ENCODE measurements at regions of chr10 and their contacts with region 1.

Region 1: DNA sequence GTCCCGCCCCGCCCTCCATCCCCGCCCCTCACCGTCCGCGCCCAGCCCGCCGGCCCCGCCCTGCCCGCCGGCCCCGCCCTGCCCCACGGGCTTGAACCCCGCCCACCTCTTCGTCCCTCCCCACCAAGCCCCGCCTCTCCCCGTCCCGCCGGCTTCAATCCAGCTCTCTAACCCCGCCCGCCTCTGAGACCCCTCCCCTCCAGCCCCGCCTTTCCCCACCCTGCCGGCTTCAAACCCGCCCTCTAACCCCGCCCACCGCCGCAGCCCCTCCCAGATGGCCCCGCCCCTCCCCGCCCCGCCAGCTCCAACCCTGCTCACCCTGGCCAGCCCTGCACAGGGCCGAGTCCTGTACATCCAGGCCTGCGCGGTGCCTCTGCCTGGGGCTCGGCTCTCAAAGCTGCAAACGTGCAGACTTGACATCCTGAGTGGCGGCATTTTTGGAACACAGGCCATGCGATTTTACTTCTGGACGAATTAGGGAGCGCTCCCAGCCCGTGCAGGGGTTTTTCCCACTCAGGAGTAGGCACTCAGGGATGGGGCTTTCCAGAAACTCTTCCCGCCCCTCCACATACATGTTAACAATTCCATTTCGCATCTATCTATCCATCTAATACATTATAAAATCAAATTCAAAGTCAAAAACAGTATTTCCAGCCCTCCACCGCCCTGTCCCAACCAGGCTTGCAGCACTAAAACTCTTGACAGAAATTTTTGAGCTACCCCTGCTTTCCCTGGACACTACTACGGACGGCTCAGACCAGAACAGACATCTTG is 475 bp upstream of the NMT2 start:
- DNase-seq: peak; percentile 94
- ATAC-seq: peak; percentile 87
- H3K4me3 ChIP-seq: peak overlapping the region in 4 of 5 experiments; percentile 19 to 52 (median 32)
- H3K4me3 Mint-ChIP-seq: peak overlapping the region; percentile 59
- H3K27ac ChIP-seq: no peak overlapping the region
- H3K27ac Mint-ChIP-seq: no peak overlapping the region
- H3K4me1 ChIP-seq: peaks cover 21 to 24% of the 10 kb centered on the region in 2 donors
- H3K4me1 Mint-ChIP-seq: peaks cover 29% of the 10 kb centered on the region
- H3K27me3 ChIP-seq: no peaks in the 10 kb centered on the region
- H3K27me3 Mint-ChIP-seq: peaks cover 7% of the 10 kb centered on the region
- CTCF ChIP-seq: no peak

Region 2: DNA sequence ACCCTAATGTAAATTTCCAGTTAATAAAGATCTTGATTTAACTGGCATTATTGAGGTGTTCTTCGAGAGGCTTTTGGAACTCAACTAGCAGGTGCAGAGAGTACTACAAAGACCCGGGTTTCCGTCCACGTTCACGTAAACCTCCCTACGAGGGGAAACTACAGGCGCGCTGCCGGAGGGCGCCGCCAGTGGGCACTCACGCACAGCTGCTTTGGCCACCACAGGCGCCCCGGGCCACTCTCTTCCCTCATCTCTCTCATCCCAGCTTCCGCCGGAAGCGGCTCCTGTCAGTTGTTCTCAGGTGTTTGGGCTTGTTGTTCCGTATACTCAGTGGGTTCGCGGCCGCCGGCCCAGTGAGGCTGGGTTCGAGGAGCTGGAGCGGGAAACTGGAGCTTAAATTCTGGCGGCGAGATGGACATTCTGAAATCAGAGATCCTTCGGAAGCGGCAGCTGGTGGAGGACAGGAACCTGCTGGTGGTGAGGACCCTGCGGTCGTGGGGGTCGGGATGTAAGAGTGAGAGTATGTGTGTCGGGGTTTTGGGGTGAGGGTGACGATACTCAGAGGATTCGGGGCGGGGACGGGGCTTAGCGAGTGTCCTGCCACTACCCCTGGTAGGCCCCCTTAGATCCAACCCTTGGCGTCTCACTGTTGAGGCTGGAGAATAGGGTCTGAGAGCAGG is 1582.2 kb before region 1 on chr10 and contains the start of gene PRPF18:
- CTCF ChIA-PET with region 1: no interaction called
- POLR2A ChIA-PET with region 1: no interaction called
- intact Hi-C with region 1: loop called (anchors 2 kb)
- DNase-seq: peak; percentile 95
- ATAC-seq: peak; percentile 100
- H3K4me3 ChIP-seq: peak within 1 kb of the TSS; percentile 53 to 99 (median 84)
- H3K4me3 Mint-ChIP-seq: peak within 1 kb of the TSS; percentile 95
- H3K27ac ChIP-seq: peak within 1 kb of the TSS; percentile 0 to 85
- H3K27ac Mint-ChIP-seq: peak within 1 kb of the TSS; percentile 90
- H3K4me1 ChIP-seq: peaks cover 10 to 13% of the 10 kb centered on the region in 2 donors
- H3K4me1 Mint-ChIP-seq: peaks cover 31% of the 10 kb centered on the region
- H3K27me3 ChIP-seq: peaks cover 0 to 16% (median 2%) of the 10 kb centered on the region in 4 experiments
- H3K27me3 Mint-ChIP-seq: peaks cover 25% of the 10 kb centered on the region
- CTCF ChIP-seq: peak; percentile 99
- total RNA-seq, gene PRPF18: 28.9 and 31.8 TPM in 2 replicates

Region 3: GRCh38 chr10:14954001-14954770 is 214.8 kb before region 1 on chr10 and contains the start of gene DCLRE1C:
- CTCF ChIA-PET with region 1: no interaction called
- POLR2A ChIA-PET with region 1: no interaction called
- intact Hi-C with region 1: loop called (anchors 2 kb)
- DNase-seq: peak; percentile 91
- ATAC-seq: peak; percentile 77
- H3K4me3 ChIP-seq: peak within 1 kb of the TSS; percentile 74 to 89 (median 77)
- H3K4me3 Mint-ChIP-seq: peak within 1 kb of the TSS; percentile 96
- H3K27ac ChIP-seq: peak within 1 kb of the TSS; percentile 87 to 89
- H3K27ac Mint-ChIP-seq: peak within 1 kb of the TSS; percentile 97
- H3K4me1 ChIP-seq: peaks cover 42 to 62% of the 10 kb centered on the region in 2 donors
- H3K4me1 Mint-ChIP-seq: peaks cover 56% of the 10 kb centered on the region
- H3K27me3 ChIP-seq: no peaks in the 10 kb centered on the region
- H3K27me3 Mint-ChIP-seq: no peaks in the 10 kb centered on the region
- CTCF ChIP-seq: no peak
- total RNA-seq, gene DCLRE1C: 58.8 and 61.8 TPM in 2 replicates

Region 4: DNA sequence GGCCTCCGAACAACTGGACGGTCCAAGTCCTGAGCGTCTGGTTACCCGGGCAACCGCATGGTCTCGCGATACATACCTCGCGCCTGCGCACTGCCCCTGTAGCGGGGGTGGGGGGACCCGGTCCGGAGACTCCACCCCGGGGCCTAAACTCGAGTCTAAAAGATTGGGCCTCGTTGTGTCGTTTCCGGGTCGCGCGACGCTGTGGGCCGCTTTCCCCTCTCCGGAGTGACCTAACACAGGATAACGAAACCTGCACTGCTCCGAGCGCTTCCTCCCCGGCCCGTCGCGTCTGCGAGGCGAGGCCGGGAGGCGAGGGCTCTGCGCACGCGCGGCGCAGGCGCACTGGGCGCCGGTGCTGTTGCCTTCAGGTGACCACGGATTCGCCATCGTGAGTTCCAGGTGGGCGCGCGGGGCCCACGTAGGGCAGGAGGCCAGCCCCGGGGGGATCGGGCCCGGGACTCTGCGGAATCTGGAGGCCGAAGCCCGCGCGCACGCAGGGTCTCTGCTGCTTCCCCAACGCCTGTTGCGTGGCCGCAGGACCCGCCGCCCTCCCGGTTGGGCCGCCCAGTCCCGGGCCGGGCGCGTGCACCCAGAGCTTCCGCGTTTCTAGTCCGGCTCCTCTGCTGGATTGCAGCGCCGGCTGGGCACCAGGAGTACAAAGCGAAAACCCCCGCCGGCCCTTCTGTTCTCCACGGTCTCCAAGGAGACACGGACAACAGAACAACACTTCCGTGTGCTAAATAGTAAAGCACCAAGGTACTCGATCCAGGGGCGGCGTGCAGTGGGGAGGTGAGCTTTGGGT is 71.8 kb before region 1 on chr10 and contains the start of gene RPP38:
- CTCF ChIA-PET with region 1: interaction called, 5 read pairs
- POLR2A ChIA-PET with region 1: interaction called, 3 read pairs
- intact Hi-C with region 1: loop called (anchors 1 kb)
- DNase-seq: peak; percentile 98
- ATAC-seq: peak; percentile 75
- H3K4me3 ChIP-seq: peak within 1 kb of the TSS; percentile 80 to 91 (median 87)
- H3K4me3 Mint-ChIP-seq: peak within 1 kb of the TSS; percentile 93
- H3K27ac ChIP-seq: peak within 1 kb of the TSS; percentile 92 to 96
- H3K27ac Mint-ChIP-seq: peak within 1 kb of the TSS; percentile 94
- H3K4me1 ChIP-seq: peaks cover 23 to 27% of the 10 kb centered on the region in 2 donors
- H3K4me1 Mint-ChIP-seq: peaks cover 26% of the 10 kb centered on the region
- H3K27me3 ChIP-seq: no peaks in the 10 kb centered on the region
- H3K27me3 Mint-ChIP-seq: no peaks in the 10 kb centered on the region
- CTCF ChIP-seq: no peak
- total RNA-seq, gene RPP38: 24.5 and 24.8 TPM in 2 replicates

Region 5: DNA sequence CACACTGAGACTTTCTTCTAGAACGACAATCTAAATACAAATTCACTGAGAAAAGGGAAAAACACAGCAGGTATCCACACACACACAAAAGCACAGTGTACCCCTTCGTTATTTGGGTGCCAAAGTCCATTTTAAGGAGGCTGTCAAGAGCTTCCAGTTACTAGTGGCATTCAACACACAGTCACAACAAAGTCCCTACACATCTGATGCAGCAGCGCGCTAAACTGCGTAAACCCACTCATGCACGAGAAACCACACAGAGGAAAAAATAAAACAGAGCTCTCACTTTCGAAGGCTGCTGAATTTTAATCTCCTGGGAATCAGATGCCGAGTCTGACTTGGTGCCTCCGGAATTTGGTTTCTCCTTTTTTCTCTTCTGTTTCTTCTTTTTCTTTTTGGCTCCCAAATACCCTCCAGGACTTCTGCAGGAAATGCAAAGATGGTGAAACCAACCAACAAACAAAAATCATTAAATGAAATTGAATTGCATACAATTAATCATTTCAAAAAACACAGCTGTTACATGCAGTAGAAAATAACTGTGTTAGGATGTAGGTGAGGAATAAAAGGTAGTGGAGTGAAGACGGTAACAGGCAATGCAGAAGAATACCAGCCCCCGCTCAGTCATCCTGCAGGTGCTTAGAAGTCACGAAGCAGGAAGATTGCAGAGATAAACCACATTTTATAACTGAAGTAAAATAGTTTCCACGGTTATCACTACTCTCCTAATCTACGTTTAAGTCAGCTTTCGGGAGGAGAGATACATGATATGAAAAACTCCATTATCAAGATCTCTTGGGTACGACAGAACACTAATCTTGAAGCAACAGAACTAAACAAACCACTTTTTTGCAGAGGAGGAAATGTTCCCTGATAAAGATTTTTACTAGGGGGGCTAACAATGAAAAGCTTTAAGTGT is 27.6 kb before region 1 on chr10:
- CTCF ChIA-PET with region 1: interaction called, 16 read pairs
- POLR2A ChIA-PET with region 1: interaction called, 24 read pairs
- intact Hi-C with region 1: loop called (anchors 1 kb)
- DNase-seq: peak; percentile 90
- ATAC-seq: peak; percentile 91
- H3K4me3 ChIP-seq: peak overlapping the region in 3 of 5 experiments; percentile 13 to 39 (median 24)
- H3K4me3 Mint-ChIP-seq: peak overlapping the region; percentile 84
- H3K27ac ChIP-seq: peak overlapping the region; percentile 20 to 58
- H3K27ac Mint-ChIP-seq: peak overlapping the region; percentile 92
- H3K4me1 ChIP-seq: peaks cover 23 to 24% of the 10 kb centered on the region in 2 donors
- H3K4me1 Mint-ChIP-seq: peaks cover 42% of the 10 kb centered on the region
- H3K27me3 ChIP-seq: no peaks in the 10 kb centered on the region
- H3K27me3 Mint-ChIP-seq: no peaks in the 10 kb centered on the region
- CTCF ChIP-seq: no peak

Region 6: GRCh38 chr10:15209827-15210509 is 41.0 kb after region 1 on chr10:
- CTCF ChIA-PET with region 1: interaction called, 5 read pairs
- POLR2A ChIA-PET with region 1: no interaction called
- intact Hi-C with region 1: loop called (anchors 1 kb)
- DNase-seq: peak; percentile 79
- ATAC-seq: peak; percentile 66
- H3K4me3 ChIP-seq: peak overlapping the region in 1 of 5 experiments; percentile 27
- H3K4me3 Mint-ChIP-seq: no peak overlapping the region
- H3K27ac ChIP-seq: no peak overlapping the region
- H3K27ac Mint-ChIP-seq: no peak overlapping the region
- H3K4me1 ChIP-seq: peaks cover 16 to 18% of the 10 kb centered on the region in 2 donors
- H3K4me1 Mint-ChIP-seq: peaks cover 28% of the 10 kb centered on the region
- H3K27me3 ChIP-seq: no peaks in the 10 kb centered on the region
- H3K27me3 Mint-ChIP-seq: no peaks in the 10 kb centered on the region
- CTCF ChIP-seq: peak; percentile 79